Naive thymus-derived CD4-positive, alpha-beta T cell (primary cell): ENCODE measurements at regions of chr4 and their contacts with region 1.

Region 1: GRCh38 chr4:69881173-69881773 is 21.3 kb upstream of the SULT1E1 start:
- DNase-seq: peak in 7 of 9 donors; percentile 25 to 62 (median 48)
- ATAC-seq: peak; percentile 90
- H3K4me3 ChIP-seq: no peak overlapping the region
- H3K4me3 Mint-ChIP-seq: no peak overlapping the region
- H3K27ac ChIP-seq: no peak overlapping the region
- H3K27ac Mint-ChIP-seq: no peak overlapping the region
- H3K4me1 ChIP-seq: no peaks in the 10 kb centered on the region
- H3K4me1 Mint-ChIP-seq: no peaks in the 10 kb centered on the region
- H3K27me3 ChIP-seq: no peaks in the 10 kb centered on the region
- H3K27me3 Mint-ChIP-seq: peaks cover 0 to 8% (median 6%) of the 10 kb centered on the region in 5 donors

Region 2: DNA sequence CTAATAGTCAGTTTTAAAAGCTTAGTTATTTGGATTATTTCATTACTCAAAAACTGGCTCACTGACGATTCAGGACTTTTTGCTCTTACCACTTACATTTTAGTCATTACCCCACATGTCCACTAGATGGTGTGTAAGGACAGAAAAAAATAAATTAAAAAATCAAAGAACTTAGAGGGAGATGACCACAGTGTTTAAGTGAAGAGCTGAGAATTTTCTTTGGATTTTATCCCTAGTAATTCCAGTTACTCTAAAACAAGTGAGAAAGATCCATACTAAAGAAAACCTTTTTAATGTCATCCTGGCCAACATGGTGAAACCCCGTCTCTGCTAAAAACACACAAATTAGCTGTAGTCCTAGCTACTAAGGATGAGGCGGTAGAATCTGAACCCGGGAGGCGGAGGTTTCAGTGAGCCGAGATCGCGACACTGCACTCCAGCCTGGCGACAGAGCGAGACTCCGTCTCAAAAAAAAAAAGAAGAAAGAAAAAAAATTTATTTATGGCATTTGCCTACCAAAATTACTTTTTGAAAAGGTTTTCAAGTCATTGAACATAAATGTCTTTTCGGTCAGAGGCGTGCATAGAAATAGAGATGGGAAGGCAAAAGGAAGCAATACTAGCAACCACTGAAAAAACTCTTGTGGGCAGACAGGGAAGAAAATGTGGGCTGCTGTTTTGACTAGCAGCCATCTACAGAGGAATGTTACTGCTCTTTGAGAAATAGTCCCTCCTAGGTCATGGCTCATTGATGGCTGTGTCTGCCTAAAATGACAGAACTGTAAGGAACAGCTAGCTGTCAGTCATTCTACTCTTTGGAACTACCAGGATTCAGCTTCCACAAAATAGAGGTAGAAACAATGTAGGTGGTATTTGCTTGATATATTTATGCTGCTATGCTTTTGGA is 1609.2 kb before region 1 on chr4:
- CTCF ChIA-PET with region 1: interaction called, 3 read pairs
- POLR2A ChIA-PET with region 1: no interaction called
- intact Hi-C with region 1: loop called in 1 of 2 experiments (anchors 5 kb)
- DNase-seq: peak in 6 of 9 donors; percentile 11 to 53 (median 40)
- ATAC-seq: peak; percentile 75
- H3K4me3 ChIP-seq: no peak overlapping the region
- H3K4me3 Mint-ChIP-seq: peak overlapping the region in 9 of 10 donors; percentile 18 to 57 (median 43)
- H3K27ac ChIP-seq: no peak overlapping the region
- H3K27ac Mint-ChIP-seq: no peak overlapping the region
- H3K4me1 ChIP-seq: no peaks in the 10 kb centered on the region
- H3K4me1 Mint-ChIP-seq: peaks cover 0 to 12% (median 0%) of the 10 kb centered on the region in 7 donors
- H3K27me3 ChIP-seq: no peaks in the 10 kb centered on the region
- H3K27me3 Mint-ChIP-seq: peaks cover 0 to 16% (median 12%) of the 10 kb centered on the region in 5 donors

Region 3: DNA sequence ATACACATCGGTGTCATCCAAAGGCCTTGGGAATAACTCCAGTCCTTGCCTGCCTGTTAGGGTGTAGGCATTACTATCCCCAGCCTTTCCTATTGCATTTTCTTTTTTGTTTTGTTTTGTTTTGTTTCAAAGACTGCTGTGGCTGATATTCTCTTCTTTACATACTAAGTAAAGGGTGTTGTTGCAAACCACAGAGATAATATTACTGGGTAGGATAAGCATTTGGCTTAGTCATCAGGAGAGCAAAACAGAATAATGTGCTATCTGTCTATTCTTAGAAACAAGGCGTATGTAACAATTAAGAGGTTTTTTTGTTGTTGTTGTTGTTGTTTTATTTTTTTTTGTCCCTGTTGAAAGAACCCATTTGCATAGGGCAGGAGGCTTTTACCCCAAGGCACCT is 559.2 kb before region 1 on chr4:
- CTCF ChIA-PET with region 1: interaction called, 5 read pairs
- POLR2A ChIA-PET with region 1: no interaction called
- intact Hi-C with region 1: loop called in 1 of 2 experiments (anchors 2 kb)
- DNase-seq: no peak
- ATAC-seq: peak; percentile 66
- H3K4me3 ChIP-seq: no peak overlapping the region
- H3K4me3 Mint-ChIP-seq: no peak overlapping the region
- H3K27ac ChIP-seq: no peak overlapping the region
- H3K27ac Mint-ChIP-seq: no peak overlapping the region
- H3K4me1 ChIP-seq: no peaks in the 10 kb centered on the region
- H3K4me1 Mint-ChIP-seq: no peaks in the 10 kb centered on the region
- H3K27me3 ChIP-seq: no peaks in the 10 kb centered on the region
- H3K27me3 Mint-ChIP-seq: peaks cover 0 to 3% (median 0%) of the 10 kb centered on the region in 5 donors

Region 4: DNA sequence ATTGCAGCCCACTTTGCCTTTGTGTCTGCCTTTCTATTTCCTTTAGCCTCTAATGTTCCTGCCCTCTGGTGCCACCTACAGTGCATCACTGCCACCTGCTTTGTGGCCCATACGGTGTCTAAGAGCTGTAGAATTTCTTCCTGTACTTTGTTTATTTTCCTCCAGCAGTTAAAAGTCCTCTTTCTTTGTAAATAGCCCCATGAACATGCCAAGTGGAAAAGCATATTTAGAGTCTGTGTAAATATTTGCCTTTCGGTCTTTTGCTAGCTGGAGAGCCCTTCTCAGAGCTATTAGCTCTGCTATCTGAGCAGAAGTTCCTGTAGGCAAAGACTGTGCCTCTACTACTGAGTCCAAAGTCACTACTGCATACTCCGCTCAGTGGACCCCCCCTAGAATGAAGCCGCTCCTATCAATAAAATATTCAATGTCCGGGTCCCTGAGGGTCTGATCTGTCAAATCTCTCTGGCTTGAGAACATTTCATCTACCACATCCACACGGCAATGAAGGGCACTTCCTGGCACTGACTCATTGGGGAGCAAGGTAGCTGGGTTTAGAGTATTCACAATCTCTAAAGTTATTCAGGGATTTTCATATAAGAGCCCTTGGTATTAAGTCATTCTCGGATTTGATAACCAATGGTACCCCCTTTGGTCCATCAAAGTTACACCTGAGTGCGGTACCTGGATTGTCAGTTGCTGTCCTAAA is 57.6 kb before region 1 on chr4:
- CTCF ChIA-PET with region 1: interaction called, 31 read pairs
- POLR2A ChIA-PET with region 1: no interaction called
- intact Hi-C with region 1: loop called (anchors 1 kb)
- DNase-seq: peak in 7 of 9 donors; percentile 34 to 71 (median 65)
- ATAC-seq: peak; percentile 96
- H3K4me3 ChIP-seq: no peak overlapping the region
- H3K4me3 Mint-ChIP-seq: peak overlapping the region in 2 of 10 donors; percentile 47 to 50
- H3K27ac ChIP-seq: no peak overlapping the region
- H3K27ac Mint-ChIP-seq: peak overlapping the region in 5 of 9 donors; percentile 6 to 75 (median 23)
- H3K4me1 ChIP-seq: peaks cover 0 to 4% of the 10 kb centered on the region in 2 donors
- H3K4me1 Mint-ChIP-seq: peaks cover 4 to 21% (median 10%) of the 10 kb centered on the region in 7 donors
- H3K27me3 ChIP-seq: no peaks in the 10 kb centered on the region
- H3K27me3 Mint-ChIP-seq: no peaks in the 10 kb centered on the region

Region 5: GRCh38 chr4:69843932-69844331 is 37.3 kb before region 1 on chr4:
- CTCF ChIA-PET with region 1: no interaction called
- POLR2A ChIA-PET with region 1: no interaction called
- intact Hi-C with region 1: no loop called
- DNase-seq: no peak
- ATAC-seq: peak; percentile 27
- H3K4me3 ChIP-seq: no peak overlapping the region
- H3K4me3 Mint-ChIP-seq: no peak overlapping the region
- H3K27ac ChIP-seq: no peak overlapping the region
- H3K27ac Mint-ChIP-seq: no peak overlapping the region
- H3K4me1 ChIP-seq: no peaks in the 10 kb centered on the region
- H3K4me1 Mint-ChIP-seq: peaks cover 0 to 4% (median 0%) of the 10 kb centered on the region in 7 donors
- H3K27me3 ChIP-seq: no peaks in the 10 kb centered on the region
- H3K27me3 Mint-ChIP-seq: peaks cover 0 to 2% (median 0%) of the 10 kb centered on the region in 5 donors

Region 6: DNA sequence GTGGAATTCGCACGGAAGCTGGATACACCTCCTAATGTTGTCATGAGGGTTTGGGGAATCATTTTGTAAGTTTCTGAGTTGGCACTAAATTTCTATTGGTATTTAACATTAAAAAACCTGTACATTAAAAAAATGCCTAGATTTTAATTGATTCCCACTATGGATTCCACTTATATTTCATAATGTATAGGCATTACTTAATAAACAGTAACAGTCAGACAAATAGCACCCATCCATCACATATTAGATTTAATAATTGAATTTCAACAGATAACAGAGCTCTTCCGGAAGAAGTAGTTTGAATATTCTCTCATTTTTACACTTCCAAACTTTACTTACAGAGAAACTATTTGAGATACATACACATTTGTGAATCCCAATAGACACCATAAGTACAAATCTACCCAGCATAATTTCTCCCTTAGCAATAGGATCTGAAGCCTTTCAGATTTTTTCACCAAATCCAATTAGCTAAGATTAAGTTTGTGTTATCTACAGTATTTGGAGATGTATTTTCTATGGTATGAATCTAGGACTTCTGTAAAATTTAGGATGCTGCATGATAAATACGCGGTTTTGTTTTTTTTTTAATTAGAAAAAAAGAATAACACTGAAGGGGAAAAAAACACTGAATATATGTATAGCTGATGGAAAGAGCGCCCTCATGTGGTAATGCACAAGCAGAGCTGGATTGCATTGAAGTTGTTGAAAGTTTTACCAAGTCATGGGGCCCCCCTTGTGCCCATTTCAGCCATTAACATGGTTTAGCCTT is 302.1 kb after region 1 on chr4:
- CTCF ChIA-PET with region 1: no interaction called
- POLR2A ChIA-PET with region 1: no interaction called
- intact Hi-C with region 1: loop called in 1 of 2 experiments (anchors 10 kb)
- DNase-seq: peak in 2 of 9 donors; percentile 1 to 5
- ATAC-seq: no peak
- H3K4me3 ChIP-seq: no peak overlapping the region
- H3K4me3 Mint-ChIP-seq: no peak overlapping the region
- H3K27ac ChIP-seq: no peak overlapping the region
- H3K27ac Mint-ChIP-seq: no peak overlapping the region
- H3K4me1 ChIP-seq: no peaks in the 10 kb centered on the region
- H3K4me1 Mint-ChIP-seq: no peaks in the 10 kb centered on the region
- H3K27me3 ChIP-seq: no peaks in the 10 kb centered on the region
- H3K27me3 Mint-ChIP-seq: peaks cover 0 to 5% (median 2%) of the 10 kb centered on the region in 5 donors

Region 7: GRCh38 chr4:70505151-70505748 is 624.0 kb after region 1 on chr4:
- CTCF ChIA-PET with region 1: interaction called, 3 read pairs
- POLR2A ChIA-PET with region 1: no interaction called
- intact Hi-C with region 1: loop called in 1 of 2 experiments (anchors 1 kb)
- DNase-seq: peak in 7 of 9 donors; percentile 19 to 49 (median 31)
- ATAC-seq: peak; percentile 73
- H3K4me3 ChIP-seq: no peak overlapping the region
- H3K4me3 Mint-ChIP-seq: no peak overlapping the region
- H3K27ac ChIP-seq: no peak overlapping the region
- H3K27ac Mint-ChIP-seq: no peak overlapping the region
- H3K4me1 ChIP-seq: no peaks in the 10 kb centered on the region
- H3K4me1 Mint-ChIP-seq: no peaks in the 10 kb centered on the region
- H3K27me3 ChIP-seq: no peaks in the 10 kb centered on the region
- H3K27me3 Mint-ChIP-seq: no peaks in the 10 kb centered on the region

Region 8: GRCh38 chr4:70559211-70559830 is 678.0 kb after region 1 on chr4:
- CTCF ChIA-PET with region 1: interaction called, 3 read pairs
- POLR2A ChIA-PET with region 1: no interaction called
- intact Hi-C with region 1: loop called in 1 of 2 experiments (anchors 1 kb)
- DNase-seq: peak in 5 of 9 donors; percentile 19 to 33 (median 31)
- ATAC-seq: peak; percentile 58
- H3K4me3 ChIP-seq: no peak overlapping the region
- H3K4me3 Mint-ChIP-seq: peak overlapping the region in 4 of 10 donors; percentile 16 to 52 (median 36)
- H3K27ac ChIP-seq: no peak overlapping the region
- H3K27ac Mint-ChIP-seq: no peak overlapping the region
- H3K4me1 ChIP-seq: no peaks in the 10 kb centered on the region
- H3K4me1 Mint-ChIP-seq: peaks cover 0 to 15% (median 6%) of the 10 kb centered on the region in 7 donors
- H3K27me3 ChIP-seq: no peaks in the 10 kb centered on the region
- H3K27me3 Mint-ChIP-seq: no peaks in the 10 kb centered on the region